ENCODE measurements at regions of chr11 and their contacts with region 1.

Region 1: DNA sequence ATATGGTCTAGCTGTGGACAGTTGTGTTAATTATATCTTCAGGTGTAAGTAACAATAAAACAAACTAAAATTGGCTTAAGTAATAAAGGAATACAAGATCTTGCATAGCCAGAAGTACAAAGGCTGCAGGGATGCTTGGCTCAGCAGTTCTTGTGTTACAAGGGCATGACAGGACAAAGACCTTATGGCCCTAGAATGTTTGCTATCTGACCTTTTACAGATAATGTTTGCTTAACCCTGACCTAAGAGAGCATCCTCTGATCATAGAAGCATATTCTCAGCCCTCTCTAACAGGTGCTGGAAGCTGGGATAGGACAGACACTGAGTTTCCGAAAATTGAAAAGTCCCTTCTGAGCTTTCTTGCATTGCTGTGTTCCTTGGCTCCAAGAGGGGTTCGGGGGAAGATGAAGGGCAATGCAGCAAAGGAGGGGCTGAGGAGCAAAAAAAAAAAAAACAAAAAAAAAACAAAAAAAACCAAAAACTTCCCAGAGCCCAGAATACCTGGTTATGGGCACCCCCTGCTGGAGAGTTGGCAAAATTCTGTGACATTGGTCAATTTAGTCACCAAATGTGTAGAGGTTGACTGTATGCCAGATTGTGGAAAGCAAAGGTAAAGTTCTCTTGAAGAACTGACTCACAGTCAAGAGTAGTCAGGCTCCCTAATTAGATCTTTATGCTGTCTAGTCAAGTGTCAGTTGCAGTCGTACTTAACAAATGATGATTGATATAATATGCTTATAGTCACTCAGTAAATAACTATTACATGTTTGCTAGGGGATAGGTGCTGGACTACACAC is 10.4 kb upstream of the HIKESHI start:
- DNase-seq: peak; percentile 85
- ATAC-seq: peak; percentile 48
- H3K4me3 Mint-ChIP-seq: peak overlapping the region; percentile 17
- H3K27ac Mint-ChIP-seq: peak overlapping the region; percentile 89
- H3K4me1 Mint-ChIP-seq: peaks cover 63% of the 10 kb centered on the region
- H3K27me3 Mint-ChIP-seq: no peaks in the 10 kb centered on the region

Region 2: DNA sequence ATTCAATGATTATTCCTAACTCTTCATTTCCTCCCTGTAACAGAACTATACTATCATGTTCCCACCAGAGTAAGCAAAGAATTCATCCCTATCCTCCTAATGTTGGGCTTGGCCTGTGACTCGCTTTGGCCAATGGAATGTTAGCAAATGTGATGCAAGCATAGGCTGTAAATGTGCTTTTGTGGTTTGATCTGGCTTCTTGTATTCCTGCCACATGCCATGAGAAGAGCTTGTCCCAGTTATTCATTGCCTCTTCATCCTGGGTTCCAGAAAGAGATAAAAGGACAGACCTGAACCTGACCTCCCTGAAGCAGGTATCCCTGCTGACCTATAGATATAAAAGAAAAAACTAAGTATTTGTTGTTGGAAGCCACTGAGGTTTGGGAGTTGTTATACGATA is 531.7 kb before region 1 on chr11:
- CTCF ChIA-PET with region 1: no interaction called
- POLR2A ChIA-PET with region 1: no interaction called
- intact Hi-C with region 1: loop called in 1 of 2 experiments (anchors 2 kb)
- DNase-seq: no peak
- ATAC-seq: no peak
- H3K4me3 Mint-ChIP-seq: no peak overlapping the region
- H3K27ac Mint-ChIP-seq: no peak overlapping the region
- H3K4me1 Mint-ChIP-seq: peaks cover 65% of the 10 kb centered on the region
- H3K27me3 Mint-ChIP-seq: no peaks in the 10 kb centered on the region

Region 3: GRCh38 chr11:86047275-86047991 is 244.2 kb before region 1 on chr11:
- CTCF ChIA-PET with region 1: interaction called, 35 read pairs
- POLR2A ChIA-PET with region 1: interaction called, 3 read pairs
- intact Hi-C with region 1: loop called (anchors 1 kb)
- DNase-seq: peak; percentile 75
- ATAC-seq: peak; percentile 73
- H3K4me3 Mint-ChIP-seq: peak overlapping the region; percentile 65
- H3K27ac Mint-ChIP-seq: peak overlapping the region; percentile 96
- H3K4me1 Mint-ChIP-seq: peaks cover 96% of the 10 kb centered on the region
- H3K27me3 Mint-ChIP-seq: no peaks in the 10 kb centered on the region

Region 4: DNA sequence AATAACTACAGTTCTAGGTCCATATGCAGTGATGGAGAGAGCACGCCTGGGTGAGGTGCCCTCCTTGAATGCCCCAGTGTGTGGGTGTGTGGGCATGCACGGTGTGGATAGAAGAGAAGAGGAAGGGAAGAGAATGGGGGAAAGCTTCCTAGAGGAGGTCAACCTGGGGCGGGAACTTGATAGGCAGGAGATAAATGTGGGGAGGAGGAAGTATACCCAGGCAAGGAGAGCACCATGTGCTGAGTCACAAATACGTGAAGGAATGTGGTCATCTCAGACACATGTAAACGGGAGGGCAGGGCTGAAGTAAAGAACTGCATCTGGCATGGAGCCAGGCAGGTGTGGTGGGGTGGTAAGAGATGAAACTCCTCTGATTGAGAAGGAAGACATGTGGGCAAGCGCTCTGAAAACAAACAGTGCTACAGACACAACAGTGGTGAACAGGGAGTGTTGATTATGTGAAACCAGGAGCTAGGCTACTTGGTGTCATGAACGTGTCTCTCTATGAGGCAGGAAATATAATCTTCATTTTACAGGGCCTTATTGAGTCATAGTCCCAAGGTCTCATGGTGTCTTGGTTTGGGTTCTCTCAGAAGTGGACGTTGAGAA is 108.6 kb before region 1 on chr11:
- CTCF ChIA-PET with region 1: no interaction called
- POLR2A ChIA-PET with region 1: no interaction called
- intact Hi-C with region 1: loop called in 1 of 2 experiments (anchors 1 kb)
- DNase-seq: peak; percentile 89
- ATAC-seq: peak; percentile 84
- H3K4me3 Mint-ChIP-seq: no peak overlapping the region
- H3K27ac Mint-ChIP-seq: no peak overlapping the region
- H3K4me1 Mint-ChIP-seq: peaks cover 6% of the 10 kb centered on the region
- H3K27me3 Mint-ChIP-seq: no peaks in the 10 kb centered on the region

Region 5: GRCh38 chr11:86244522-86245368 is 46.9 kb before region 1 on chr11 and contains the start of gene EED:
- CTCF ChIA-PET with region 1: interaction called, 7 read pairs
- POLR2A ChIA-PET with region 1: interaction called, 4 read pairs
- intact Hi-C with region 1: loop called (anchors 1 kb)
- DNase-seq: peak; percentile 97
- ATAC-seq: peak; percentile 79
- H3K4me3 Mint-ChIP-seq: no peak within 1 kb of the TSS
- H3K27ac Mint-ChIP-seq: no peak within 1 kb of the TSS
- H3K4me1 Mint-ChIP-seq: peaks cover 42% of the 10 kb centered on the region
- H3K27me3 Mint-ChIP-seq: peaks cover 3% of the 10 kb centered on the region
- total RNA-seq, gene EED: 90.3 to 127 TPM

Region 6: DNA sequence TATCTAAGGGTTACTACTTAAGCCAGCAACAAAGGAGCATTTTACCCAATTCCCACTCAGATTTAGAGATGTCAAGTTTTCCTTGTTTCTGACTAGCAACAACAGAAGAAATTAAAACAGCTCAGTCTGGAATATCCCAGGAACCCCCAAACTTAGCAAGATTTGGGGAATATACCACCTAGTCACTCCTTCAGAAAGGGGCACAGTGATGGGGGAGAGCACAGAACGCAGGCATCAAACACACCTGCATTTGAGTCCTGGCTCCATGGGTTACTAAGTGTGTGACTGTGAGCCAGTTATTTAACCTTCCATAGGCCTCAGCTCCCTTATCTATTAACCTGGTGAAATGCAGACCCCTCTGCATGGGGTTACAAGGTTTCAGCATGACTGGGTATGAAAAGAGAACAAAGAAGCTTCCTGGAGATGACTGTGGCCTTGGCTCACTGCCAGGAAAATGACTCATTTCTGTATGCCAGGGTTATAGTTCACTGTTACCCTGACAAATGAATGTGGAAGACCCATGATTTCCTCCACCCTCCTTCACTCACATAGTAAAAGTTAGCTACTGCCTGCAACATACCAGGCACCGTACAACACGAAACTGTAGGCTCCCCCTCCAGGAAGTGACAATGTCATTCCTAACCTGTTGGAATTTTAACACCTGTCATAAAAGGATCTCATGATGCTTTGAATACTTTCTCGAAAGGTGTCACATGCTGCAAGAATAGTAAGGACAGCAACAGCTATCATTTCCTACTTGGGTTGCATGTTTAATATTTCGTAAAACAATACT is 301.2 kb after region 1 on chr11:
- CTCF ChIA-PET with region 1: no interaction called
- POLR2A ChIA-PET with region 1: no interaction called
- intact Hi-C with region 1: loop called (anchors 1 to 5 kb)
- DNase-seq: peak; percentile 96
- ATAC-seq: peak; percentile 96
- H3K4me3 Mint-ChIP-seq: no peak overlapping the region
- H3K27ac Mint-ChIP-seq: peak overlapping the region; percentile 87
- H3K4me1 Mint-ChIP-seq: peaks cover 70% of the 10 kb centered on the region
- H3K27me3 Mint-ChIP-seq: no peaks in the 10 kb centered on the region